ENCODE measurements at regions of chr7 and their contacts with region 1.

Region 1: DNA sequence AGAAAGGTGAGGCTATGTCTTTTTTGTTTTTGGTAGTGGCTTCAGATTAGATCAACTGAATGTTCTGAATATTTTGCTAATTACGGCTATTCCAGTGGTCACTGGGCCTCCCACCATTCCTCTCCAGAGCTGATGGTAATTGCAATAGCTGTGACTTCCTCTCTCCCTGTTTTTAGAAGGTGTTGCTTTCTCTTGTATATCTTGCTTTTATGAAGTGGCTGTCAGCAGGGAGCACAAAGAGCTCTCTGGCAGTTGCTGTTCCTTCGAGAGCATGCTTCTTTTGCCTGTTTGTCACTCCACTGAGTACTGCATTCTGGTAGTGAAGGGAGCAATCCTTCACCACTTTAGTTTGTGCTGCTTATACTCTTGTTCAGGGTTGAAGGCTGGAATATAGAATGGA is 133.3 kb downstream of the EXOC4 start:
- DNase-seq: no peak
- ATAC-seq: no peak
- H3K4me3 ChIP-seq: no peak overlapping the region
- H3K27ac ChIP-seq: no peak overlapping the region
- H3K4me1 ChIP-seq: no peaks in the 10 kb centered on the region
- H3K27me3 ChIP-seq: no peaks in the 10 kb centered on the region
- CTCF ChIP-seq: no peak
- POLR2A ChIP-seq: no peak
- RAD21 ChIP-seq: no peak

Region 2: GRCh38 chr7:133369130-133369529 is 17.1 kb before region 1 on chr7:
- CTCF ChIA-PET with region 1: no interaction called
- POLR2A ChIA-PET with region 1: interaction called, 3 read pairs
- RAD21 ChIA-PET with region 1: no interaction called
- intact Hi-C with region 1: loop called (anchors 1 kb)
- DNase-seq: no peak
- ATAC-seq: no peak
- H3K4me3 ChIP-seq: no peak overlapping the region
- H3K27ac ChIP-seq: no peak overlapping the region
- H3K4me1 ChIP-seq: no peaks in the 10 kb centered on the region
- H3K27me3 ChIP-seq: no peaks in the 10 kb centered on the region
- CTCF ChIP-seq: no peak
- POLR2A ChIP-seq: no peak
- RAD21 ChIP-seq: no peak

Measured in HCT116 (cell line).